ENCODE measurements at regions of chr18 and their contacts with region 1.

Region 1: DNA sequence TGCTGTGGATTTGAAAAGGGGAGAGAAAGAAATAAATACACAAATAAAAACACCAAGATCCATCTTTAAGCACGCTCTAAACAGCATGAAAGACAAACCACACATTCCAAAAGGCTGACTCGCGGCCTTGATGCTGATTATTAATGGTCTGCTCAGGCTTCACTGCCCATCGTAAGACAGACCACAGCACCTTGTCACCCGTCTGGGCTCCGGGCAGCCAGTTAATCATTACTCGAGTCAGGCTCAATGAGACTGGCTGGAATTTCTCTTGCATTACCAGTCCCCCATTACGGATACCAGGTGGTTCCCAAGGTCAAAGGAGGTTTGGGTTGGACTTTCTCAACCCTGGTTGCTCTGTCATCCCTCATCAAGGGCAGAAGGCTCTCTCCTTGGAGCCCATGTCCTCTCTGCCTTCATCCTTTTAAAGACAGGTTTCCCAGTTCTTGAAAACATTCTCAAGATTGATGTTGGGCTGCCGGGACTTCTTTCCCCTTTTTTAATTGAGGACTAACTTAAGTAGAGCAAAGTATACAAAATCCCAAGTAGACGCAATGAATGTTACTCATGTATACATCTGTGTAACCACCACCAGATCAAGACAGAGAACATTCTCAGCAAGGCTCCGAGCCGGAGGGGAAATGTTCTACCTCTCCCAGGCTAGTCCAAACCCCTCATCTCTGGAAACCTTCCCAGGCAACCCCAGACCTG is 8.1 kb downstream of the SMAD7 start:
- DNase-seq: peak; percentile 83
- ATAC-seq: peak; percentile 93
- H3K4me3 ChIP-seq: no peak overlapping the region
- H3K27ac ChIP-seq: 0 out of 2 replicates have a peak overlapping the region, but pooled peaks have one; percentile 13
- H3K4me1 ChIP-seq: peaks cover 47% of the 10 kb centered on the region
- H3K27me3 ChIP-seq: no peaks in the 10 kb centered on the region
- CTCF ChIP-seq: no peak

Region 2: DNA sequence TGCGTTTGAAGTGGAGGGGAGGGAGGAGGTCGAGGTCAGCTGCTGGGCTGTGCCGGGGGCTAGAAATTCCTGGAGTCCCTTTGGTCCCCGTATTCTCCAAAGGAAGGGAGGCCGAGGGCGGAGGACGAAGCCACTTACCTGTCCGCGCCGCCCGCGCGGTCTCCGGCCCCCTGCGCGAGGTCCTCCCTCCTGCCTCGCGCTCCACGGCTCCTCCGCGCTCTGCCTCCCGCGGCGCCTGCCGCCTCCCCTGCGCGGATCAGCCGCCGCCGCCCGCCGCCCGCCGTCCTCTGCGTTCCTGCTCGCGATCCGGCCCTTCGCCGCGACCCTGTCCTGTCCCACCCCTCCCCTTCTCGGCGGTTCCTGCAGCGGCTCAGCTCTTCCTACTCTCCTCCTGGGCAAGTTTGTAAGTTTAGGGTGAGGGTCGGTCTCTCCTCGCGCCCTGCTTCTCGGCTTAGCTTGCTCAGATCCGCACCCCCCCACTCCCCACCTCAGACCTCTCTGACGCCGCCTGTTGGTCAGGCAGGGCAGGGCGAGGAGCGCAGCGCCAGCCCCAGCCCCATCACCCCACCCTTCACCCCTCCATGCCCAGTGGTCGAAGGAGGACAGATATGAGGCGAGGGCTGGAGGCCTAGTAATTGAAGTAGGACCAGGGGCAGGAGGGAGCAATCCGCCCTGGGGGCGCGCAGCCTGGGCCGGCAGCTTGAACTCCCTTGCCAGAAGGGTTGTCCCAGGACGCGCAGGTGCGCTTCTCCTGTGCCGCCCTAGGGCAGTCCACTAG is 1681.6 kb before region 1 on chr18:
- CTCF ChIA-PET with region 1: interaction called, 11 read pairs
- POLR2A ChIA-PET with region 1: no interaction called
- intact Hi-C with region 1: no loop called
- DNase-seq: no peak
- ATAC-seq: no peak
- H3K4me3 ChIP-seq: no peak overlapping the region
- H3K27ac ChIP-seq: no peak overlapping the region
- H3K4me1 ChIP-seq: no peaks in the 10 kb centered on the region
- H3K27me3 ChIP-seq: no peaks in the 10 kb centered on the region
- CTCF ChIP-seq: no peak

Region 3: GRCh38 chr18:48767090-48767690 is 175.5 kb before region 1 on chr18:
- CTCF ChIA-PET with region 1: no interaction called
- POLR2A ChIA-PET with region 1: no interaction called
- intact Hi-C with region 1: no loop called
- DNase-seq: no peak
- ATAC-seq: no peak
- H3K4me3 ChIP-seq: no peak overlapping the region
- H3K27ac ChIP-seq: no peak overlapping the region
- H3K4me1 ChIP-seq: no peaks in the 10 kb centered on the region
- H3K27me3 ChIP-seq: no peaks in the 10 kb centered on the region
- CTCF ChIP-seq: no peak

Region 4: DNA sequence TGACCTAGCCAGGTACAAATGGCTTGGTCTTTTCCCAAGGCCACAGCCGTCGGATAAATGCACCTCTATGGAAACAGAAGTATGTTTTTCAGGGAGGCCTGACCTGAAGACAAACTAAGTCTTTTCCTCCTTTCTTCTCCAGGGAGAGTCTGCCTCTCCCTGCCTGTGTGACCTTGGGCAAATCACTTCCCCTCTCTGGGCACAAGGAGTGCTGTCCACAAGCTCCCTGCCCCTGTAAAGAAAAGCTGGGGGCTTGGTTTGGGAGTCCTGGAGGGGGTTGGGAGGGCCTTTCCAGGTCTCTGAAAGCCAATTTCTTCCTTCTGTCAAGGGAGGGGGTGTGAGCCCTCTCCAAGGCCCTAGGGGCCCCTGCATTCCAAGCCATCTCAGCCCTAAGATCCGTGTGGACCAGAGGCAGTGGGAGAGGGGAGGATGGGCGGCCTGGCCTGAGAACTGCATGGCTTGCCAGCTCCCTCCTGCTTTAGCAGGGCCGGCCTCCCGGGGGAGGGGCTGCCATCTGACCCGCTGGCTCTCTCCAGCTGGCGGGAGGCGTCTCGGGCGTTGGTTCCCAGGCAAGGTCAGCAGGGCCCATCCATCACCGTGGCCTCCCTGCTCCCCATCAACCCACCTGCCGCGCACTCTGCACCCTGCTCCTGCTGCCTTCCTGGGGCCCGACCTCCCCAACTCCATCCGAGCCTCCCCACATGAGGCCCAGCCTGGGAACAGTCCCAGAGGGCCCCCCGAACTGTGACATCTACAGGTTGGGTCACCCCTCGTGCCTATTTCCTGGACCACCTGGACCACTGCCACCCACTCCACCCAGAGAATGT is 53.4 kb before region 1 on chr18:
- CTCF ChIA-PET with region 1: no interaction called
- POLR2A ChIA-PET with region 1: no interaction called
- intact Hi-C with region 1: no loop called
- DNase-seq: no peak
- ATAC-seq: no peak
- H3K4me3 ChIP-seq: no peak overlapping the region
- H3K27ac ChIP-seq: no peak overlapping the region
- H3K4me1 ChIP-seq: no peaks in the 10 kb centered on the region
- H3K27me3 ChIP-seq: no peaks in the 10 kb centered on the region
- CTCF ChIP-seq: no peak

Region 5: GRCh38 chr18:48902023-48902855 is 40.5 kb before region 1 on chr18:
- CTCF ChIA-PET with region 1: no interaction called
- POLR2A ChIA-PET with region 1: no interaction called
- intact Hi-C with region 1: no loop called
- DNase-seq: peak; percentile 66
- ATAC-seq: peak; percentile 70
- H3K4me3 ChIP-seq: no peak overlapping the region
- H3K27ac ChIP-seq: no peak overlapping the region
- H3K4me1 ChIP-seq: peaks cover 21% of the 10 kb centered on the region
- H3K27me3 ChIP-seq: no peaks in the 10 kb centered on the region
- CTCF ChIP-seq: no peak

Region 6: GRCh38 chr18:49031511-49032188 is 88.9 kb after region 1 on chr18:
- CTCF ChIA-PET with region 1: no interaction called
- POLR2A ChIA-PET with region 1: no interaction called
- intact Hi-C with region 1: no loop called
- DNase-seq: no peak
- ATAC-seq: no peak
- H3K4me3 ChIP-seq: no peak overlapping the region
- H3K27ac ChIP-seq: no peak overlapping the region
- H3K4me1 ChIP-seq: no peaks in the 10 kb centered on the region
- H3K27me3 ChIP-seq: no peaks in the 10 kb centered on the region
- CTCF ChIP-seq: no peak

Measured in PC-3 (cell line).